Naive thymus-derived CD4-positive, alpha-beta T cell (primary cell): ENCODE measurements at regions of chr1 and their contacts with region 1.

Region 1: DNA sequence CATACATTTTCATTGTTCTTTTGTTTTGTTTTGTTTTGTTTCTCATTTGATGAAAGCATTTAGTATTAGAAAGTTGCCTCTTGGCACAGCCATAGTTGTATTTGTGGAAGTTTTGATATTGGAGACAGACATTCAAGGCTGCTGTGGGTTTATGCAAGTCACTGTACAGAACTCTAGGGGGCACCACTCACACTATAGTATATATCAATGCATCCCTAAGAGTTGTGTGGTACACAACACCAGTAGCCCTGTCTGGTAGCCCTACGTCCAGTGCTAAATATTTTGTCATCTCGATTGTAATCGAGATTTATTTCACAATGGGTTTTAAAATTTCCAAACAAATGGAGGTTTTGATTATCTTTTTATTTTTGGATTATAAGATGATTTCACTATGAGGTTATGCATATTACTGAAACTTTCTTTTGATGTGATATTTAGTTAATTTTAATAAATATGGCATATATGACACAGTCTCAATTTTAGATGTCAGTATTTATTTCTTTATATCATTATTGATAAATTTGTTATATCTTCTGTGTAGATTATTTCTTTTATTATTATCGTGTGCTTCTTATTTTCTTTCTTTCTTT is 112.2 kb downstream of the NR5A2 start:
- DNase-seq: peak in 7 of 9 donors; percentile 5 to 56 (median 23)
- ATAC-seq: peak; percentile 93
- H3K4me3 ChIP-seq: no peak overlapping the region
- H3K4me3 Mint-ChIP-seq: no peak overlapping the region
- H3K27ac ChIP-seq: no peak overlapping the region
- H3K27ac Mint-ChIP-seq: no peak overlapping the region
- H3K4me1 ChIP-seq: no peaks in the 10 kb centered on the region
- H3K4me1 Mint-ChIP-seq: peaks cover 0 to 8% (median 0%) of the 10 kb centered on the region in 7 donors
- H3K27me3 ChIP-seq: no peaks in the 10 kb centered on the region
- H3K27me3 Mint-ChIP-seq: peaks cover 0 to 12% (median 0%) of the 10 kb centered on the region in 5 donors

Region 2: DNA sequence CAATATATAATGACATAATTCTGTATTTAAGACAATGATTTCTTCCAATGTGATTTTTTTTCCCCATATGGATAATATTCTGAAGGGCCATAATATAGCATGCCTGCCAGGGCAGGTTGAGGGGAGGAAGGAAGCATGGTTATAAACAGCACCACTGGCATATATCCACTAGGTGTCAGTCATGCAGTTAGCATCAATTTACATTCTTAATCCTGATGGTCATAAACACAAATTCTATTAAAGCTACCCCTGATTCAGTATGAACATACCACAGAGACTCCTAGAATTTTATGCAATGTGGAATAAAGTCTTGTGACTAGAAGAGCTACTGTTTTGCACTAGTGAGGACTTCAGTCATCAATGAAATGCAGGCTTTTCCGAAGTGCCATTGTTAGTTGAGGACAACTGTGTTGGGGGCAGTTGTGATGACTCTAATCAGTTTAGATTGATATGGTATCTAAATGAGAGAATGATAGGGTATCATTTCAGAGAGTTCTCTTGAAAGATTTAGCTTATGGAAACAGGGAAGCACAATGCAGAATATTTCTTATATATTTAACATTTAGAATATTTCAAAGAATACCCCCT is 455.0 kb before region 1 on chr1:
- CTCF ChIA-PET with region 1: no interaction called
- POLR2A ChIA-PET with region 1: no interaction called
- intact Hi-C with region 1: loop called in 1 of 2 experiments (anchors 2 kb)
- DNase-seq: peak in 7 of 9 donors; percentile 7 to 38 (median 28)
- ATAC-seq: peak; percentile 85
- H3K4me3 ChIP-seq: no peak overlapping the region
- H3K4me3 Mint-ChIP-seq: no peak overlapping the region
- H3K27ac ChIP-seq: no peak overlapping the region
- H3K27ac Mint-ChIP-seq: no peak overlapping the region
- H3K4me1 ChIP-seq: no peaks in the 10 kb centered on the region
- H3K4me1 Mint-ChIP-seq: no peaks in the 10 kb centered on the region
- H3K27me3 ChIP-seq: no peaks in the 10 kb centered on the region
- H3K27me3 Mint-ChIP-seq: peaks cover 7 to 33% (median 8%) of the 10 kb centered on the region in 5 donors

Region 3: DNA sequence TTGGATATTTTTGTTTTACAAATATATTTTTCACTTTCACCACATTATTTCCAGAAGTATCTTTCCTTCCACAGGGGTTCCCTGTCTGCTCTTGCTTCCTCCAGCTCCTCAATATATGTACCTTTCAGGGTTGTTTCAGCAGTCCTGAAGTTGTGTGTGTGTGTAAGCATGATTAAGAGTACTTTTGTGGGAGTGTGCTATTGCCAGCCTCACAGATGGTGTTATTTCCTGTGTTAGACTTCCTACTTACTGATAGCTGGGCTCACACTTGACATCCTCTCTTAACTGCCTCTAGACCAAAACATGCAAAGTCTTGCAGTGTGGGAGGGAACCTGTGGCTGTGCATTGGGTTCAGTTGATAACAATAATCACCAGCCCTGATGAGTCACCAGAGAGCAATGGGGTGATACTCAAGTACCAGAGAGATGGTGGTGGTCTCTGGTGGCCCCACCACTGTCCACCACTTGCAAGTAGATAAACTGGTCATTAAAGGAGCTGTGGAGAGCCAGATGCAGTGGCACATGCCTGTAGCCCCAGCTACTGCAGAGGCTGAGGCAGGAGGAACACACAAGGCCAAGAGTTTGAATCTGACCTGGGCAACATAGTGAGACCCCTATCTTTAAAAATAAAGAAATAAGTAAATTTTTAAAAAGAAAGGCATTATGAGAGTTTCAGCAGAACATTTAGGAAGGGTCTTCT is 14.5 kb after region 1 on chr1:
- CTCF ChIA-PET with region 1: interaction called, 4 read pairs
- POLR2A ChIA-PET with region 1: no interaction called
- intact Hi-C with region 1: loop called (anchors 1 to 2 kb)
- DNase-seq: peak in 8 of 9 donors; percentile 26 to 65 (median 50)
- ATAC-seq: peak; percentile 88
- H3K4me3 ChIP-seq: no peak overlapping the region
- H3K4me3 Mint-ChIP-seq: peak overlapping the region; percentile 45 to 87 (median 67)
- H3K27ac ChIP-seq: peak overlapping the region; percentile 64
- H3K27ac Mint-ChIP-seq: peak overlapping the region; percentile 74 to 99 (median 89)
- H3K4me1 ChIP-seq: peaks cover 27 to 30% of the 10 kb centered on the region in 2 donors
- H3K4me1 Mint-ChIP-seq: peaks cover 18 to 54% (median 29%) of the 10 kb centered on the region in 7 donors
- H3K27me3 ChIP-seq: no peaks in the 10 kb centered on the region
- H3K27me3 Mint-ChIP-seq: peaks cover 0 to 2% (median 0%) of the 10 kb centered on the region in 5 donors

Region 4: DNA sequence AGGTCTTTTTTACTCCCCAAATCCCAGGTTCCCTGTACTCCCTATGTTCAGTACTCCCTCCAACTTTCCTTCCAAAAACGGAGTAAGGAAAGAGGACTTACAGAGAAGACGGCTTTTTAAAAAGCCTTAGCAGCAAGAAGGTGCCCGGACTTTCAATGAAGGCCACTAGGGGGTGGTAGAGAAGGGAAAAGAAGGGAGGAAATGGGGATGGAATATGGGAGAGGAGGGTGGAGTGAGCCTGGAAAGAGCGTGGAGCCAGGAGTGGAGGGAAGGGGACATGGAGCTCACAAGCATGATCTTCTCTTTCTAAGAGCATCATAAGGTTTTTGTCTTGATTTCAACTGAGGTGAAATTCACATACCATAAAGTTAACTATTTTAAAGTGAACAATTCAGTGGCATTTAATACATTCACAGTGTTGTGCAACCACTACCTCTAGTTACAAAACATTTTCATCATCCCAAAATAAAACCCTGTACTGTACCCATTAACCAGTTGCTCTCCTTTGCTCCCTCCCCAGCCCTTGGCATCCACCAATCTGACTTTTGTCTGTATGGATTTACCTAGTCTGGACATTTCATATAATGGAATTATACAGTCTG is 140.2 kb after region 1 on chr1:
- CTCF ChIA-PET with region 1: interaction called, 4 read pairs
- POLR2A ChIA-PET with region 1: no interaction called
- intact Hi-C with region 1: loop called (anchors 1 to 2 kb)
- DNase-seq: peak in 6 of 9 donors; percentile 7 to 31 (median 16)
- ATAC-seq: peak; percentile 40
- H3K4me3 ChIP-seq: no peak overlapping the region
- H3K4me3 Mint-ChIP-seq: no peak overlapping the region
- H3K27ac ChIP-seq: no peak overlapping the region
- H3K27ac Mint-ChIP-seq: no peak overlapping the region
- H3K4me1 ChIP-seq: no peaks in the 10 kb centered on the region
- H3K4me1 Mint-ChIP-seq: peaks cover 0 to 4% (median 0%) of the 10 kb centered on the region in 7 donors
- H3K27me3 ChIP-seq: no peaks in the 10 kb centered on the region
- H3K27me3 Mint-ChIP-seq: peaks cover 0 to 14% (median 0%) of the 10 kb centered on the region in 5 donors

Region 5: DNA sequence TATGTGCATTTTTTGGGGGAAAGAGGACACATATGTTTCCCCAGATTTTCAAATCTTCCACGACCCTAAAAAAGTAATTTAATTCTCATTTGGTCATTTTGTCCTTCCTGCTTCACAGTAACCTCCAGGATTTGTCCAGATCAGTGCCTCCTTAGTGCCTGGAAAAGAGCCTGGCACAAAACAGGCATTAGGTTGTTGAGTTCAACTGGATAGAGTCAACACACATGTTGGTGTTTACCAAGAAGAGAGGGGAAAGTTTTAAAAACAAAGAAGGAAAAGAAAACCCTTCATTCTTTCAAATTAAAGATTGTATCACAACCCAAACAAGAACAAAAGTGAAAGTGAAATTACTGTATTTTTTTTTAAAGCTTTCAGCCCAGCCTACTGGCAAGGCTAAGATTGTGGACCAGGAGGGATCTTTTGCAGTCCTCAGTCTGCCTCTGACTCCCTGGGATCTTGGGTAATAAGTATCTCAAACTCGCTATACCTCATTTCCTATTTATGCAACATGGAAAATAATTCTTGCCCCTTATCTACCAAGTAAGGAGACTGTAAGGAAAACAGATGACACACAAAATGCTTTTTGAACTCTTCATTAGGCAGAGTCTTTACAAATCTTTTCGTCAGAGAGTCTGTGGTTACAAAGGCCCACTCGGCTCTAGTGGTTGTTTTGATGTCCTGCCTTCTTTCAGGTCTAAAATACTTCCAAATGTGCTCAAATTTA is 212.2 kb after region 1 on chr1:
- CTCF ChIA-PET with region 1: no interaction called
- POLR2A ChIA-PET with region 1: no interaction called
- intact Hi-C with region 1: loop called in 1 of 2 experiments (anchors 5 kb)
- DNase-seq: peak in 7 of 9 donors; percentile 14 to 49 (median 39)
- ATAC-seq: peak; percentile 77
- H3K4me3 ChIP-seq: peak overlapping the region; percentile 41
- H3K4me3 Mint-ChIP-seq: peak overlapping the region; percentile 65 to 88 (median 82)
- H3K27ac ChIP-seq: peak overlapping the region; percentile 43
- H3K27ac Mint-ChIP-seq: peak overlapping the region; percentile 80 to 95 (median 91)
- H3K4me1 ChIP-seq: peaks cover 8 to 16% of the 10 kb centered on the region in 2 donors
- H3K4me1 Mint-ChIP-seq: peaks cover 21 to 45% (median 31%) of the 10 kb centered on the region in 7 donors
- H3K27me3 ChIP-seq: no peaks in the 10 kb centered on the region
- H3K27me3 Mint-ChIP-seq: no peaks in the 10 kb centered on the region

Region 6: GRCh38 chr1:200510228-200510623 is 370.5 kb after region 1 on chr1:
- CTCF ChIA-PET with region 1: interaction called, 3 read pairs
- POLR2A ChIA-PET with region 1: no interaction called
- intact Hi-C with region 1: loop called (anchors 1 kb)
- DNase-seq: peak; percentile 15 to 71 (median 61)
- ATAC-seq: peak; percentile 86
- H3K4me3 ChIP-seq: no peak overlapping the region
- H3K4me3 Mint-ChIP-seq: no peak overlapping the region
- H3K27ac ChIP-seq: no peak overlapping the region
- H3K27ac Mint-ChIP-seq: no peak overlapping the region
- H3K4me1 ChIP-seq: no peaks in the 10 kb centered on the region
- H3K4me1 Mint-ChIP-seq: peaks cover 0 to 4% (median 0%) of the 10 kb centered on the region in 7 donors
- H3K27me3 ChIP-seq: no peaks in the 10 kb centered on the region
- H3K27me3 Mint-ChIP-seq: peaks cover 0 to 28% (median under 1%) of the 10 kb centered on the region in 5 donors